H1 (cell line): ENCODE measurements at regions of chr14 and their contacts with region 1.

Region 1: GRCh38 chr14:78448164-78449094 is 278.3 kb downstream of the NRXN3 start:
- DNase-seq: peak; percentile 34 to 93
- H3K4me3 ChIP-seq: no peak overlapping the region
- H3K27ac ChIP-seq: no peak overlapping the region
- H3K4me1 ChIP-seq: no peaks in the 10 kb centered on the region
- H3K27me3 ChIP-seq: no peaks in the 10 kb centered on the region
- CTCF ChIP-seq: peak; percentile 67 to 89 (median 89)
- EP300 ChIP-seq: no peak
- POLR2A ChIP-seq: no peak
- RAD21 ChIP-seq: peak; percentile 91 to 95

Region 2: GRCh38 chr14:78432046-78432445 is 16.4 kb before region 1 on chr14:
- CTCF ChIA-PET with region 1: interaction called, 14 read pairs
- POLR2A ChIA-PET with region 1: no interaction called
- DNase-seq: no peak
- H3K4me3 ChIP-seq: no peak overlapping the region
- H3K27ac ChIP-seq: no peak overlapping the region
- H3K4me1 ChIP-seq: no peaks in the 10 kb centered on the region
- H3K27me3 ChIP-seq: no peaks in the 10 kb centered on the region
- CTCF ChIP-seq: no peak
- EP300 ChIP-seq: no peak
- POLR2A ChIP-seq: no peak
- RAD21 ChIP-seq: no peak

Region 3: GRCh38 chr14:78697341-78697740 is 248.9 kb after region 1 on chr14:
- CTCF ChIA-PET with region 1: interaction called, 11 read pairs
- POLR2A ChIA-PET with region 1: no interaction called
- DNase-seq: no peak
- H3K4me3 ChIP-seq: no peak overlapping the region
- H3K27ac ChIP-seq: no peak overlapping the region
- H3K4me1 ChIP-seq: no peaks in the 10 kb centered on the region
- H3K27me3 ChIP-seq: no peaks in the 10 kb centered on the region
- CTCF ChIP-seq: peak in 2 of 3 experiments; percentile 47 to 69; a peak in 2 of 4 replicates
- EP300 ChIP-seq: no peak
- POLR2A ChIP-seq: no peak
- RAD21 ChIP-seq: peak; percentile 77 to 83